Pancreas (tissue), 10 donors: ENCODE measurements at regions of chr13 and their contacts with region 1.

Region 1: DNA sequence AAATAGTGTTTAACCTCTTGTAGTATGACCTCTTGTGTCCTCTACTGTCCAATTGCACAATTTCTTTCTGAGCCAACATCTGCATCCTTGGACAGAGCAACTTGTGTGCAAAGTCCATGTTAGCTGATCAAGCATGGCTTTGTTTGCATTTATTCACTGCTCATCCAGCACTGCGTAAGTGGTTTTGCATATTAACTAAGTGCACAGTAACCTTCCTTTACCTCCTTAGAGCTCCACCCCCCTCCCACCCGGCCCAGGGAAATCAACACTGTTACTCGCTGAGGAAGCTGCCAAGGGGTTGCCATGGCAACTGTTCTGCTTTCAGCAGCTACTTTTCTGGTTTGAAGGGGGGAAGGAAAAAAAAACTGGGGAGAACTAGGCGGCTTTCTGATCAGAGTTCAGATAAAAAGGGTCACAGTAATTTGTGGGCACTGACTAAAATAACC is 153.5 kb upstream of the KLF12 start:
- DNase-seq: peak; percentile 67 to 80 (median 78)
- ATAC-seq: peak; percentile 71 to 83 (median 78)
- H3K4me3 ChIP-seq: peak overlapping the region in 1 of 4 donors; percentile 3
- H3K27ac ChIP-seq: peak overlapping the region in 1 of 4 donors; percentile 2
- H3K4me1 ChIP-seq: peaks cover 12 to 15% (median 14%) of the 10 kb centered on the region in 3 donors
- H3K27me3 ChIP-seq: no peaks in the 10 kb centered on the region
- CTCF ChIP-seq: no peak

Region 2: GRCh38 chr13:73835138-73835721 is 452.5 kb before region 1 on chr13:
- intact Hi-C with region 1: loop called in 1 of 3 experiments (anchors 10 kb)
- DNase-seq: no peak
- ATAC-seq: peak in 3 of 4 donors; percentile 67 to 69 (median 69)
- H3K4me3 ChIP-seq: no peak overlapping the region
- H3K27ac ChIP-seq: no peak overlapping the region
- H3K4me1 ChIP-seq: no peaks in the 10 kb centered on the region
- H3K27me3 ChIP-seq: no peaks in the 10 kb centered on the region
- CTCF ChIP-seq: peak; percentile 45 to 77 (median 61)